Mammary epithelial cell (primary cell): ENCODE measurements at regions of chr10 and their contacts with region 1.

Region 1: DNA sequence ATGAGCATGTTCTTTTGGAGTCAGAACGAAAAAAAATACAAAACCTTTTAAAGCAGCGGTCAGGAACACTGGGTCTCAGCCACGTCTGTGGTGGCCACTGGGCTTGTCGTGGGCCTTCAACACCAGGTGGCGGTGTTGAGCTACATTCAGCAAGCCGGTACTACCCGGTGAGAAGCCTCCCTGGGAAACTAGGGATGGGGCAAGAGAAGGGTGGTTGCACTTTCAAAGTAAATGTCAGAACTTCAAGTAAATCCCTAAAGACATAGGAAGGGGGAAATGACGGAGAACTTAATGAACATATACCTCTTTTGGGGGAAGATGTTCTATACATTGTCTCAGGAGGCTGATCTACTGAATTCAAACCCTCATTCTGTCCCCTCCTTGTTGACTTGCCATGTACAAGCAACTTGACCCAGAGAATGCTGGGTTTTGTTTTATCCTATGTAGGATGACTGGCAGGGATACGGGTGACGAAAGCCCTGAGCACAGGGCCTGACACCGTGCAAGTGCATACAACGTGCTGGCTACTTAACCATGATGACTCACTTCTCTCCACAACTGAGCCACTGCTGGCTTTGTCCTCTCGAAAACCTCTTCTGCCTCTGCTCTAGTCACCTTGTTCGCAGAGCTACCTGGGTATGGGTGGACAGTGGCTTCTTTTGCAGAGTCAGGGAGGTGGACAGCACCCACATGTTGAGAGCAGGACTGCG is 49.0 kb upstream of the BAMBI start:
- DNase-seq: peak; percentile 67
- H3K4me3 ChIP-seq: no peak overlapping the region
- H3K27ac ChIP-seq: no peak overlapping the region
- H3K4me1 ChIP-seq: peaks cover 9% of the 10 kb centered on the region
- H3K27me3 ChIP-seq: no peaks in the 10 kb centered on the region
- CTCF ChIP-seq: peak; percentile 89

Region 2: GRCh38 chr10:28676968-28677887 is 48.9 kb after region 1 on chr10 and contains the start of gene BAMBI:
- CTCF ChIA-PET with region 1: interaction called, 3 read pairs
- dilution Hi-C with region 1: no loop called
- in situ Hi-C with region 1: no loop called
- intact Hi-C with region 1: loop called (anchors 5 kb)
- DNase-seq: peak; percentile 89
- H3K4me3 ChIP-seq: peak within 1 kb of the TSS; percentile 78 to 84 (median 83)
- H3K27ac ChIP-seq: peak within 1 kb of the TSS; percentile 44
- H3K4me1 ChIP-seq: peaks cover 29% of the 10 kb centered on the region
- H3K27me3 ChIP-seq: no peaks in the 10 kb centered on the region
- CTCF ChIP-seq: peak; percentile 19 to 64
- total RNA-seq, gene BAMBI: 4.2 to 7.0 TPM

Region 3: DNA sequence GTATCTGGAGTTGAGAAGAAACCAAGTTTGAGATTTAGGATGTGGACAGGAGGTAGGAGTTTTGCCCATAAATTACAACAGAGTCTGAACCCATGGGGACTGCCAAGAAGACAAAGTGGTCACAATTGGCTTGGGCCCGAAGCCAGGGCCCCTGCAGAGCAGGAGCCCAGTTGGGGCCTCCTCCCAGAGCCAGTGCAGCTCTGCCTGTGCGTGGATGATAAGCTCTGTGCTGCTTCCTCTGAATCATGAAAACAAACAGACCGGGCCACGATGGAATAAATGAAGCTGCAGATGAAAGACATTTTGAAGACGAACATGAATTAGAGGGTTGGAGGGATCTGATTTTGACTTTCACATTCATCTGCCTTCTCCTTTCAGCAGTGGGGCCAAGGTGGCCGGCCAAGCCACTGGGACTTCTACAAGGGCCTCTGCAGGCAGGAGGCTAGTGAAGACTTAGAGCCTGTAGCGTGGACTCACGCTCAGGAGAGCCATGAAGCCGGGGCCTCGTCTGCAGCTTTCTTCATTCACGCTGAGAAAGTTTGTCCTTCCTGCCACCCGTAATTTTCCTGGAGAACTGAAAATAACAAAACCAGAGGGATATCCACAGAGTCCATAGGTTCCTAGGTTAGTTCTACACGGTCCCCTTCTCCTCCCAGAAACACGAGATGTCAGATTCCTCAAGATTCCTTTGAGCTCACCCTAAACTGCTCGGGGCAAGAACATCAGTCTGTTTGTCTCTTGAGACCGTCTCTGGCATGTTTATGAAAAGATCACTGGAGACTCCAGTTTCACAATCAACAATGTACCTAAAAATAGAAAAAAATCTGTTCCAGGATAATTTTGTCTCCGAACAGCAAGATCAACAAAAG is 503.8 kb after region 1 on chr10:
- CTCF ChIA-PET with region 1: no interaction called
- dilution Hi-C with region 1: no loop called
- in situ Hi-C with region 1: no loop called
- intact Hi-C with region 1: loop called (anchors 1 kb)
- DNase-seq: no peak
- H3K4me3 ChIP-seq: no peak overlapping the region
- H3K27ac ChIP-seq: no peak overlapping the region
- H3K4me1 ChIP-seq: peaks cover 4% of the 10 kb centered on the region
- H3K27me3 ChIP-seq: no peaks in the 10 kb centered on the region
- CTCF ChIP-seq: no peak

Region 4: GRCh38 chr10:29304264-29305030 is 676.1 kb after region 1 on chr10:
- CTCF ChIA-PET with region 1: no interaction called
- dilution Hi-C with region 1: no loop called
- in situ Hi-C with region 1: loop called in 1 of 2 experiments (anchors 10 kb)
- intact Hi-C with region 1: loop called (anchors 1 kb)
- DNase-seq: peak; percentile 43
- H3K4me3 ChIP-seq: no peak overlapping the region
- H3K27ac ChIP-seq: no peak overlapping the region
- H3K4me1 ChIP-seq: no peaks in the 10 kb centered on the region
- H3K27me3 ChIP-seq: no peaks in the 10 kb centered on the region
- CTCF ChIP-seq: peak; percentile 77 to 91